Esophagus muscularis mucosa (tissue), 4 donors: ENCODE measurements at regions of chr15 and their contacts with region 1.

Region 1: GRCh38 chr15:89358755-89359439 is 24.3 kb upstream of the POLG start:
- DNase-seq: no peak
- H3K4me3 ChIP-seq: peak overlapping the region; percentile 51 to 66 (median 55)
- H3K27ac ChIP-seq: no peak overlapping the region
- H3K4me1 ChIP-seq: peaks cover 13 to 38% (median 29%) of the 10 kb centered on the region in 4 donors
- H3K27me3 ChIP-seq: peaks cover 0 to 100% (median 62%) of the 10 kb centered on the region in 4 donors
- CTCF ChIP-seq: peak; percentile 92 to 99 (median 96)
- EP300 ChIP-seq: no peak
- POLR2A ChIP-seq: no peak

Region 2: GRCh38 chr15:89430530-89431341 is 71.8 kb after region 1 on chr15:
- intact Hi-C with region 1: loop called (anchors 1 kb)
- DNase-seq: peak; percentile 96
- H3K4me3 ChIP-seq: peak overlapping the region; percentile 49 to 64 (median 50)
- H3K27ac ChIP-seq: no peak overlapping the region
- H3K4me1 ChIP-seq: peaks cover 12 to 13% (median 13%) of the 10 kb centered on the region in 4 donors
- H3K27me3 ChIP-seq: peaks cover 0 to 31% (median 0%) of the 10 kb centered on the region in 4 donors
- CTCF ChIP-seq: peak; percentile 95 to 100 (median 100)
- EP300 ChIP-seq: no peak
- POLR2A ChIP-seq: no peak

Region 3: GRCh38 chr15:89714775-89715174 is 355.9 kb after region 1 on chr15:
- intact Hi-C with region 1: no loop called
- DNase-seq: no peak
- H3K4me3 ChIP-seq: no peak overlapping the region
- H3K27ac ChIP-seq: no peak overlapping the region
- H3K4me1 ChIP-seq: no peaks in the 10 kb centered on the region
- H3K27me3 ChIP-seq: no peaks in the 10 kb centered on the region
- CTCF ChIP-seq: no peak
- EP300 ChIP-seq: no peak
- POLR2A ChIP-seq: no peak